PC-9 (cell line): ENCODE measurements at regions of chr10 and their contacts with region 1.

Region 1: GRCh38 chr10:4344511-4344994 is 481.5 kb upstream of the AKR1E2 start:
- DNase-seq: peak; percentile 87 to 97
- H3K4me3 ChIP-seq: peak overlapping the region; percentile 16; the same call in 1 of the 2 replicates
- H3K27ac ChIP-seq: peak overlapping the region; percentile 93
- H3K4me1 ChIP-seq: peaks cover 23% of the 10 kb centered on the region
- H3K27me3 ChIP-seq: no peaks in the 10 kb centered on the region
- CTCF ChIP-seq: no peak

Region 2: DNA sequence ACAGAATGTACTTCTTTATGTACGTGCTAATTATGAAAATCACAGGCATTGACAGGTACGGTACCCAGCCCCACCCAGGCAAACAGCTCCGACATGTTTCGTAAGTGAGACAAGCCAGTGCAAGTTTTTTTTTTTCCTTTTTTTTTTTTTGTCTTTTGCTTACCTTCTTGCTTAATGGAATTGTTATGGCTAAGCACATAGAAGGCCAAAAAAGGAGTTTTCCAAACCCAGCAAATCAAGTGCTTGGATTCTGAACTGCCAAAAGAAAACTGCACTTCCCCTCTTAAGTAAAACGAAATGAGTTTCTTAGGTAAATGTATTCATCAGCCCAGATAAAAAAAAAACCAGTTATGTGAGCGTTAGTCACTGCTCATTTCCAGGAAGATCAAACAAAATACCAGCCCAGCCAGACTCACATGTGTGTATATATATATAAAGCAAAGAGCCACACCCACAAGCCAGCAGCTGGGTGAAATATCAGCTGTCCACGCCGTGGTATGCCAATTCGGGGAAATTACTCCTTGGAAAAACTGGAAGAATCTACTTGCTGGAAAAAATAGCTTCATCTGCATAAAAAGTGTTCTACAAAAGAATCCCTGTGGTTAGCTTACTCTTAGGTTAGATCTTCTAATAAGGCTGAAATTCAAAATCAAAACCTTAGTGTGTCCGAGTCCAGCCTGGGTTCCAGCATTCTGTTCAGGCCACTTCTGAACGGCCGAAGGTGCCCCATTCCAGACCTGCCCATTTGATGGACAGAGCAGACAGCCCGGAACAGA is 567.6 kb before region 1 on chr10:
- CTCF ChIA-PET with region 1: no interaction called
- POLR2A ChIA-PET with region 1: interaction called, 13 read pairs
- intact Hi-C with region 1: no loop called
- DNase-seq: peak; percentile 74 to 96
- H3K4me3 ChIP-seq: no peak overlapping the region; the same call in 1 of the 2 replicates
- H3K27ac ChIP-seq: peak overlapping the region; percentile 87
- H3K4me1 ChIP-seq: peaks cover 67% of the 10 kb centered on the region
- H3K27me3 ChIP-seq: no peaks in the 10 kb centered on the region
- CTCF ChIP-seq: no peak

Region 3: DNA sequence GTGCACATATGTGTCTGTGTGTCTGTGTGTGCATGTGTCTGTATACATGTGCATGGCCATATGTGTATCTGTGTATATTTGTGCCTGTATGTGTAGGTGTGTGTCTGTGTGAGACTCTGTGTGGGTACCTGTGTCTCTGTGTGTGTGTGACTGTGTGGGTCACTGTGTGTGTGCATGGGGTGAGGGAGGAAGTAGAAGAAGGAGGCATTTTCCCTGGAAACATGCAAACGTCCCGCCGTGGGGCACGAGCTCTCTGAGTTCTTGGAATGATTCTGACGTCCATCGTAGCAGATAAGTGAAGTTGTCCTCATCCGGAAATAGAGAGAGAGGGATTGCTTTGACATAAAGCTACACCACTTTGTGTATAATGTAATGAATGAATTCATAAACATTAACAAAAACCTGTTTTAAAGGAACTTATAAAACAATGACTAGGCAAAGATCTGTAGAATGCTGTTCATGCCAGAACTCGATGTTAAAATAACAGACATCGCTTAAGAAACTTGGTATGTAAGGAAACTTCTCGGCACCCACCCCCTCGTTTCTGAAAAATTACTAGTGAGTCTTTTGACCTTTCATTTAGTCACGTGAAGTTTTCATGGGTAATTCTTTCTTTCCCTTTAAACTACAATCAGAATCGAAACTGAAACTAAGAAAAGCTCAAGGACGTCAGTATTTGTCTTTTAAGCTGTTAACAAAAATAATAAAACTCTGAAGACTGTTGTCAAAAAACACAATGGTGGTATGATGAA is 516.0 kb before region 1 on chr10:
- CTCF ChIA-PET with region 1: no interaction called
- POLR2A ChIA-PET with region 1: no interaction called
- intact Hi-C with region 1: loop called (anchors 5 kb)
- DNase-seq: no peak
- H3K4me3 ChIP-seq: no peak overlapping the region
- H3K27ac ChIP-seq: no peak overlapping the region
- H3K4me1 ChIP-seq: peaks cover 31% of the 10 kb centered on the region
- H3K27me3 ChIP-seq: no peaks in the 10 kb centered on the region
- CTCF ChIP-seq: no peak

Region 4: GRCh38 chr10:3948843-3949242 is 395.7 kb before region 1 on chr10:
- CTCF ChIA-PET with region 1: no interaction called
- POLR2A ChIA-PET with region 1: no interaction called
- intact Hi-C with region 1: loop called (anchors 2 kb)
- DNase-seq: no peak
- H3K4me3 ChIP-seq: no peak overlapping the region
- H3K27ac ChIP-seq: no peak overlapping the region
- H3K4me1 ChIP-seq: peaks cover 23% of the 10 kb centered on the region
- H3K27me3 ChIP-seq: no peaks in the 10 kb centered on the region
- CTCF ChIP-seq: no peak

Region 5: DNA sequence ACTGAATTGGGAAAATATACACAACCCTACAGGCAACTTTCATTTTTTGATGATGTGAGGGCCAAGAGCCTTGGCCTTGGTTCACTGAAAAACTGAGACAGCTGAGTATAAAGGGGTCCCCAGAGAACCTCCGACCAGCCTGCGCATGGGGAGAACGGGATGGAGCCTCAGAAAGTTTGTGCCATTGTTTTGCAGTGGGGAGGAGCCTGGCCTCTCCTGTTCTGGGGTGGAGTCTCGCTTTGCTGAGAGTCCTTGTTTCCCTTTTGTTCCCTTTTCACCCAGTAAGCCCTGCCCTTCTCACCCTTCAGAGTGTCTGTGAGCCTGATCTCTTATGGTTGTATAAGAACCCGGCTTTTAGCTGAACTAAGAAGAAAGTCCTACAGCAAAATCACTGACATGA is 288.2 kb after region 1 on chr10:
- CTCF ChIA-PET with region 1: no interaction called
- POLR2A ChIA-PET with region 1: no interaction called
- intact Hi-C with region 1: loop called (anchors 1 kb)
- DNase-seq: peak in 1 of 2 experiments; percentile 19
- H3K4me3 ChIP-seq: no peak overlapping the region
- H3K27ac ChIP-seq: no peak overlapping the region
- H3K4me1 ChIP-seq: peaks cover 7% of the 10 kb centered on the region; the same call in 1 of the 2 replicates
- H3K27me3 ChIP-seq: no peaks in the 10 kb centered on the region
- CTCF ChIP-seq: no peak

Region 6: GRCh38 chr10:4835494-4835918 is 491.0 kb after region 1 on chr10:
- CTCF ChIA-PET with region 1: no interaction called
- POLR2A ChIA-PET with region 1: no interaction called
- intact Hi-C with region 1: no loop called
- DNase-seq: no peak
- H3K4me3 ChIP-seq: no peak overlapping the region
- H3K27ac ChIP-seq: no peak overlapping the region
- H3K4me1 ChIP-seq: no peaks in the 10 kb centered on the region
- H3K27me3 ChIP-seq: no peaks in the 10 kb centered on the region
- CTCF ChIP-seq: no peak